ENCODE measurements at regions of chr2 and their contacts with region 1.

Region 1: DNA sequence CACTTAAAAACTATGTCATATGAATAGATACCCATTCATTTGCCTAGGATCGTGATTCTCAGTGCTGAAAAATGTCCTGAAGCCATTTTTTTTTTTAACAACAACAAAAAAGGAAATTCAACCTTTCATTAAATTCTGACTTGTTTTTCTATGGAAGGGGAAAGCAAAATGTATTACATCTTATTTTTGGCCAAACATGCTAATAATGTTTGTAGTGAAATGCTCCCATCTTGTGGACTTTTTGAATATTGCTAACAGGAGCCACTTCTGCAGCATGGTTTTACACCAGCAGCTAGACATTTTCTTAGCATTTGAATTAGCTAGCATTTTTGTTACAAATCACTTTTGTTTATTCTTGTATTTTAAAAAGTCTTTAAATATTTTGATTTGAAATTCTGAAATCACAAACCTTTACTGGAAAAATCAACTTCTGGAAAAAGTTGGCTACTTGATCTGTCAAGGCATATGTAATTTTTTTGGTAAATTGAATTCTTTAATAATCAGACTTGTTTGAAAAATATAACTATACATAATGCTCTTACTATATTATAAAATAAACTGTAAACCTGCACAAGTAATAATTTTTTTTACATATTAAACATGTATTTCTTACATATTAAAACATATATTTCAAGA is 75.8 kb downstream of the KIDINS220 start:
- DNase-seq: no peak
- H3K4me3 ChIP-seq: no peak overlapping the region
- H3K27ac ChIP-seq: no peak overlapping the region
- H3K4me1 ChIP-seq: no peaks in the 10 kb centered on the region
- H3K27me3 ChIP-seq: no peaks in the 10 kb centered on the region
- CTCF ChIP-seq: peak in 2 of 4 experiments; percentile 49 to 56
- POLR2A ChIP-seq: no peak

Region 2: DNA sequence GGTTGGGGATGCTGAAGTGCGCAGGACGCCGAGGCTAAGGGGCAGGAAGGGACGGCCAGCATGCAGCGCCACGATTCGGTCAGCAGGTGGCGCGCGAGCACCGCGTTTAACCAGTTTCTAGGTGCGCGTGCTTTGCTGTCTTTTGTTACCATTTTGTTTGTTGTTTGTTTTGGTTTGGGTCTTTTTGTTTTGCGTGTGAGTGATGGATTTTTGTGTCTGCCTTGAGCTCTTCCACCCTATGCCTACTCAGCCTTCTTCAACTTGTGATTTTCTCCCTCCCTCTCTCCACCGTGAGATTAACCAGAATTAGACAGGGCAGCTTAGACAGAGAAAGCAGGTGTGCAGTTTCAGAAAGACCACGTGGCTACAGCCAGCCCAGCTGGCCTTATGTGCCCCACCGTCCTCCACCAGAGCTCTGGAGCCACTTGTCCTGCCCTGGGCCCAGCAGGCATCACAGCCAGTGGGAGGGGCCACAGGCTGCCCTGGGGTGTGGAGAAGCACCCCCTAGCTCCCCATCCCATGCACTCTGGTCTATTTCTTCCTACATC is 1664.2 kb before region 1 on chr2:
- intact Hi-C with region 1: loop called (anchors 10 kb)
- DNase-seq: peak; percentile 43
- H3K4me3 ChIP-seq: no peak overlapping the region
- H3K27ac ChIP-seq: no peak overlapping the region
- H3K4me1 ChIP-seq: no peaks in the 10 kb centered on the region
- H3K27me3 ChIP-seq: no peaks in the 10 kb centered on the region
- CTCF ChIP-seq: peak; percentile 81 to 91 (median 86)
- POLR2A ChIP-seq: no peak

Region 3: GRCh38 chr2:7427293-7428060 is 1334.2 kb before region 1 on chr2:
- intact Hi-C with region 1: loop called (anchors 10 kb)
- DNase-seq: no peak
- H3K4me3 ChIP-seq: no peak overlapping the region
- H3K27ac ChIP-seq: no peak overlapping the region
- H3K4me1 ChIP-seq: no peaks in the 10 kb centered on the region
- H3K27me3 ChIP-seq: no peaks in the 10 kb centered on the region
- CTCF ChIP-seq: peak; percentile 43 to 73 (median 66)
- POLR2A ChIP-seq: no peak

Region 4: GRCh38 chr2:8606226-8606625 is 155.4 kb before region 1 on chr2:
- intact Hi-C with region 1: no loop called
- DNase-seq: no peak
- H3K4me3 ChIP-seq: no peak overlapping the region
- H3K27ac ChIP-seq: peak overlapping the region in 1 of 2 donors; percentile 16
- H3K4me1 ChIP-seq: no peaks in the 10 kb centered on the region
- H3K27me3 ChIP-seq: no peaks in the 10 kb centered on the region
- CTCF ChIP-seq: no peak
- POLR2A ChIP-seq: no peak

Region 5: GRCh38 chr2:8750221-8750620 is 11.4 kb before region 1 on chr2:
- intact Hi-C with region 1: no loop called
- DNase-seq: no peak
- H3K4me3 ChIP-seq: no peak overlapping the region
- H3K27ac ChIP-seq: no peak overlapping the region
- H3K4me1 ChIP-seq: no peaks in the 10 kb centered on the region
- H3K27me3 ChIP-seq: no peaks in the 10 kb centered on the region
- CTCF ChIP-seq: no peak
- POLR2A ChIP-seq: no peak

Region 6: DNA sequence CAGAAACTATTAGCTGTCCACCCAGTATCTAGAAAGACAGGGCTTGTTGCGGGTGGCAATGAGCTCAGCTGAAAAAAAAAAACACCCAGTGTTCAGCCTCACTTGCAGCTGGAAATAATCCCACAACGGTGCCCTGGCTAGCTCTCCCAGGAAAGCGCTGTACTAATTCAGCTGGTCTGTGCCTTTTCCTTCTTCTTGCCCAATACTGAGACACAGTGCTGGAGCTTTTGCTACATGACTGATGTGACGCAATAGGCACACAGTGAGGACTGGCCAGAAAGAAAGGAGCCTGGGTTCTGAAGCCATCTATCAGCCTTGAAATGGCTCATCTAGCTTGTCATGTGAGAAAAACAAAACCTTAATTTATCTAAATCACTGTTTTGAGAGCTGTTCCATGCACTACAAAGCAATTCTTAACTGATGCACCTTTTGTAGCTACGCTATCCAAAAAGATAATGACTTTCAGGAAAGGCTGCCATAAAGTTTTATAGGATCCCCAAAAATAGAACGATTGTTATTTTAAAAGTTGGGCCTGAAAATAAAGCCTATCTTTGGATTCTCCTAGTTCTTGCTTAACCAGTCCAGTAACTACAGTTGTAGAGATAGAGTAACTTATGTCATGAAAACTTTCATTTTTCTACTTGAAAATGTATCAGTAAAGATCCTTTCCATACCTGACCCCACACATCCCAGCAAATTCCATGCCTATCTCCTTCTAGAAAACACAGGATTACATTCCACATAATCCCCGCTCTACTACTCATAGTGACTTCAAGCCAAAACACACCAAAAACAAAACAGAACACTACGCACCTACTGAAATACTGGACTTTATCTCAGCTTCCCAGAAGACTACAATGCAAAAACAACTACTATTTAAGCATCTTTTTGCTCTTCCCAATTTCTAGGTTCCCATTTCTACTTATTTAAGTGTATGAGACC is 59.9 kb after region 1 on chr2:
- intact Hi-C with region 1: no loop called
- DNase-seq: peak; percentile 40
- H3K4me3 ChIP-seq: no peak overlapping the region
- H3K27ac ChIP-seq: peak overlapping the region; percentile 2 to 32
- H3K4me1 ChIP-seq: no peaks in the 10 kb centered on the region
- H3K27me3 ChIP-seq: no peaks in the 10 kb centered on the region
- CTCF ChIP-seq: no peak
- POLR2A ChIP-seq: no peak